Left ventricle myocardium superior (tissue), 1 donor: ENCODE measurements at regions of chr22 and their contacts with region 1.

Region 1: DNA sequence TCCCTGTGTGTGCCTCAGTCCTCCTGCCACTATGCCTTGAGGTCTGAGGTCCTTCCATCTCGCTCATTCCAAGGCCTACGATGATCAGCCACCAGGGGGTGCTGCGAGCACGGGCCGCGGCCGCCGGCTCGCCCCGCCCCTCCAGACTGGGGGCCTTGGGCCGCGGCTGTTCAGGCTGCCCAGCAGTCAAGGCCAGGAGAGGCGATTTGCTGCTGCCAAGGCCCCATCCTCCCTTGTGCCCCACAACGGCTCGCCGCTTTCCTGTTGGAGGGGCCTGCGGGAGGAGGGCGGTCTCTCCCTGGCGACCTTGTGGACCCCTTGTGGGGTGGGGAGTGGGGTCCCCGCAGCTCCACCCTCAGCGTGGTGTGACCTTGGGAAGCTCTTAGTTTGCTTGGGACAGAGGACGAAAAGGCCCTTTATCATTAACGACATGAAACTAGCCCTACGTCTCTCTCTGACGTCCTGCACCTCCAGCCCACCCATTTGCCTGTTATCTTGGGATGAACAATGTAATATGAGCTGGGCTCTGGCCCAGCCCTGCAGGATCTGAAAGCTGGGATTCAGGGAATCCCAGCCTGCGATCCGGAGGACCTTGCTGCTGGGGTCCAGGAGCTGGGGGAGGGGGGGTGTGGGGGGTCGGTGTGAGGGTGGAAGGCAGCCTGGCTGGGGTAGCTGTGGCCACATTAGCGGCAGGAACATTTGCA is 5.3 kb upstream of the GALR3 start:
- DNase-seq: peak; percentile 91
- ATAC-seq: peak; percentile 93

Region 2: GRCh38 chr22:37768273-37768672 is 49.6 kb before region 1 on chr22:
- intact Hi-C with region 1: no loop called
- DNase-seq: no peak
- ATAC-seq: no peak

Region 3: GRCh38 chr22:37862570-37863325 is 44.9 kb after region 1 on chr22:
- intact Hi-C with region 1: loop called (anchors 2 kb)
- DNase-seq: no peak
- ATAC-seq: peak; percentile 55